ENCODE measurements at regions of chr10 and their contacts with region 1.

Region 1: DNA sequence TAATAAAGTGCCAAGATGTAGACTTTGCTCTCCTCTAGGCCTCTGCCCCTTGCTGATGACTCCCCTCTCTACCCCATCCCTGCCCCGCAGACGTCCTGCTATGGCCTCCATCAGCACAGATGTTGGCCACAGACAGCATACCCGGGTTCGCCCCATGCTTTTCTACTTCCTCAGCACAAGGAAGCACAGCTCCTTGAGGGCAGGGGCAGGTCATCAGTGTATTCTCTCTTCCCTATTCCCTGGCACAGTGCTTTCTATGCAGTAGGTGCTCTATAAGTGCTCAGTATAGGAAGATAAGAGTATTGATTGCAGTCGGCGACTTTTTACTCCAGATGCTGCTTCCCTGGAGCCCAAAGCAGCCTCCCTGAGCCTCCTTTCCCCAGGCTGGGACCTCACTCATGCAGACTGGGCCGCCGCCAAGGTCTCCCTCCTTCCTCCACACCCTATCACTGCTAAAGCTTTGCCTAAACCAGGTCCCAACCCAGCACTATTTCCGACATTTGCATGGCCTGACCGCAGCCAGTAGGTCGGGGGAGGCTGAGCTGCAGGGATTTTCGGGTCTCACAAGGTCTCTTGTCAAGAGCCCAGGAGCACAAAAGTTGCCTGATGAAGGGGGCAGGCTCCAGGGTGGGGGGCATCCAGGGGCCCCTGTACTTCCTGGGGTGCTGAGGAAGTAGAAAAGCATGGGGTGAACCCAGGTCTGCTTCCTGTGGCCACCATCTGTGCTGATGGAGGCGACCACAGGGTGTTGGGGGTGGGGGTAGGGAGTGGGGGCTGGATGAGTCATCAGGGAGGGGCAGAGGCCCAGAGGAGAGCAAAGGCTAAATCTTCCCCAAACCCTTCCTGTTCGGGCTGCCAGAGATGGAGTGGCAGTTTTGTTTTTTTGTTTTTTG is 8.0 kb downstream of the CALHM3 start:
- DNase-seq: peak; percentile 87
- H3K4me3 Mint-ChIP-seq: peak overlapping the region; percentile 0
- H3K27ac Mint-ChIP-seq: peak overlapping the region; percentile 74
- H3K4me1 Mint-ChIP-seq: peaks cover 24% of the 10 kb centered on the region
- H3K27me3 Mint-ChIP-seq: no peaks in the 10 kb centered on the region

Region 2: DNA sequence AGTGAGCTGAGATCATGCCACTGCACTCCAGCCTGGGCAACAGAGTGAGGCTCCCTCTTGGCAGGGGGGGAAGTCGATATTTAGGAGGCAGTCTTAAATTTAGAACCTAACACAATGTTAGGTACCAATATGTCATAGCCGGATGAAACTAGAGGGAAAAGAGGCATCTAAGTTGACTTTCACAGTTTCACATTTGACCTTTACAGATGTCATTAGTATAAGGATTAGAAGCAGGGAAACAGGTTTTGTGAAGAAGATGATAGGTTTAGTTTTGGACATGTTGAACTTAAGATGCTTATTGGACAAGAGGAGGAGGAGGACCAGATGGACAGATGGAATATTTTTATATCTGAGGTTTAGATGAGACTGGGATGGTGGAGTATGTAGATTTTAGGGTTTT is 440.4 kb before region 1 on chr10:
- CTCF ChIA-PET with region 1: no interaction called
- POLR2A ChIA-PET with region 1: no interaction called
- intact Hi-C with region 1: no loop called
- DNase-seq: no peak
- H3K4me3 Mint-ChIP-seq: no peak overlapping the region
- H3K27ac Mint-ChIP-seq: no peak overlapping the region
- H3K4me1 Mint-ChIP-seq: no peaks in the 10 kb centered on the region
- H3K27me3 Mint-ChIP-seq: no peaks in the 10 kb centered on the region

Region 3: DNA sequence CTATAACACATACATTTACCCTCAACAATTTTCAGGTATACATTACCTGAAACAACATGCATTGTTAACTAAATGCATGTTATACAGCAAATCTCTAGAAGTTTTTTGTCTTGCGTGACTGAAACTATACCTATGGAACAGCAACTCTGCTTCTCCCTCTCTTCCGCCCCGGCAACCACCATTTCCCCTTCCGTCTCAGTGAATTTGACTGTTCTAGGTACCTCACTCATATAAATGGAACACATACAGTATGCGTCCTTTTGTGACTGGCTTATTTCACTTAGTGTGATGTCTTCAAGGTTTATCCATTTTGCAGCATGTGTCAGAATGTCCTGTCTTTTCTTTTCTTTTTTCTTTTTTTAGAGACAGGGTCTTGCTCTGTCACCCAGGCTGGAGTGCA is 41.4 kb before region 1 on chr10:
- CTCF ChIA-PET with region 1: no interaction called
- POLR2A ChIA-PET with region 1: no interaction called
- intact Hi-C with region 1: loop called (anchors 1 kb)
- DNase-seq: peak; percentile 51
- H3K4me3 Mint-ChIP-seq: no peak overlapping the region
- H3K27ac Mint-ChIP-seq: peak overlapping the region; percentile 48
- H3K4me1 Mint-ChIP-seq: peaks cover 34% of the 10 kb centered on the region
- H3K27me3 Mint-ChIP-seq: no peaks in the 10 kb centered on the region

Region 4: GRCh38 chr10:103451831-103452505 is 19.0 kb before region 1 on chr10 and contains the start of gene CALHM2:
- CTCF ChIA-PET with region 1: interaction called, 7 read pairs
- POLR2A ChIA-PET with region 1: interaction called, 3 read pairs
- intact Hi-C with region 1: loop called (anchors 1 kb)
- DNase-seq: peak; percentile 75
- H3K4me3 Mint-ChIP-seq: peak within 1 kb of the TSS; percentile 90
- H3K27ac Mint-ChIP-seq: peak within 1 kb of the TSS; percentile 91
- H3K4me1 Mint-ChIP-seq: peaks cover 44% of the 10 kb centered on the region
- H3K27me3 Mint-ChIP-seq: no peaks in the 10 kb centered on the region
- total RNA-seq, gene CALHM2: 21.6 to 22.5 TPM

Region 5: DNA sequence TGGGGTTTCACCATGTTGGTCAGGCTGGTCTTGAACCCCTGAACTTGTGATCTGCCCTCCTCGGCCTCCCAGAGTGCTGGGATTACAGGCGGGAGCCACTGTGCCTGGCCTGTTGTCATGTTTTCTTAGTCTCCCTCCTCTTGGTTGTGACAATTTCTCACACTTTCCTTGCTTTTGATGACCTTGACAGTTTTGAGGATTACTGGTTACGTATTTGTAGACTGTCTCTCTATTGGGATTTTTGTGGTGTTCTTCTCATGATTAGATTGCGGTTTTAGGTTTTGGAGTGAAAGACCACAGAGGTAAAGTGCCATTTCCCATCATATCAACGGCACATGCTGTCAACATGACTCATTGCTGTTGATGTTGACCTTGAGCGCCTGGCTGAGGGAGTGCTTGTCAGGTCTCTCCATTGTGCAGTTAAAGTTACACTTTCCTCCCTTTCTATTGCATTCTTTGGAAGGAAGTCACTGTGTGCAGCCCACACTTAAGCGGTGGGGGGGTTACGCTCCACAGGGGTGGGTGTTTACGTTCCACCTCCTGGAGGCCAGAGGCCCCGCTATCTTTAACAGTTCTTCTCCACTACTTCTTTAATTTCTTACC is 33.3 kb after region 1 on chr10:
- CTCF ChIA-PET with region 1: no interaction called
- POLR2A ChIA-PET with region 1: no interaction called
- intact Hi-C with region 1: no loop called
- DNase-seq: peak; percentile 69
- H3K4me3 Mint-ChIP-seq: peak overlapping the region; percentile 17
- H3K27ac Mint-ChIP-seq: peak overlapping the region; percentile 31
- H3K4me1 Mint-ChIP-seq: peaks cover 30% of the 10 kb centered on the region
- H3K27me3 Mint-ChIP-seq: peaks cover 41% of the 10 kb centered on the region